ENCODE measurements at regions of chr2 and their contacts with region 1.

Region 1: GRCh38 chr2:43542285-43542937 is 53.4 kb downstream of the THADA start:
- DNase-seq: peak; percentile 32 to 59 (median 47)
- H3K4me3 ChIP-seq: no peak overlapping the region
- H3K4me3 Mint-ChIP-seq: no peak overlapping the region
- H3K27ac ChIP-seq: no peak overlapping the region
- H3K27ac Mint-ChIP-seq: no peak overlapping the region
- H3K4me1 ChIP-seq: peaks cover 29 to 39% of the 10 kb centered on the region in 2 donors
- H3K4me1 Mint-ChIP-seq: peaks cover 35% of the 10 kb centered on the region
- H3K27me3 ChIP-seq: no peaks in the 10 kb centered on the region
- H3K27me3 Mint-ChIP-seq: no peaks in the 10 kb centered on the region
- CTCF ChIP-seq: peak; percentile 79

Region 2: GRCh38 chr2:42859006-42859552 is 683.3 kb before region 1 on chr2:
- intact Hi-C with region 1: loop called in 1 of 2 experiments (anchors 10 kb)
- DNase-seq: peak; percentile 48 to 73 (median 66)
- H3K4me3 ChIP-seq: no peak overlapping the region
- H3K4me3 Mint-ChIP-seq: no peak overlapping the region
- H3K27ac ChIP-seq: no peak overlapping the region
- H3K27ac Mint-ChIP-seq: no peak overlapping the region
- H3K4me1 ChIP-seq: peaks cover 7 to 8% of the 10 kb centered on the region in 2 donors
- H3K4me1 Mint-ChIP-seq: peaks cover 8% of the 10 kb centered on the region
- H3K27me3 ChIP-seq: no peaks in the 10 kb centered on the region
- H3K27me3 Mint-ChIP-seq: peaks cover 1 to 5% (median 3%) of the 10 kb centered on the region in 3 donors
- CTCF ChIP-seq: peak; percentile 97

Region 3: DNA sequence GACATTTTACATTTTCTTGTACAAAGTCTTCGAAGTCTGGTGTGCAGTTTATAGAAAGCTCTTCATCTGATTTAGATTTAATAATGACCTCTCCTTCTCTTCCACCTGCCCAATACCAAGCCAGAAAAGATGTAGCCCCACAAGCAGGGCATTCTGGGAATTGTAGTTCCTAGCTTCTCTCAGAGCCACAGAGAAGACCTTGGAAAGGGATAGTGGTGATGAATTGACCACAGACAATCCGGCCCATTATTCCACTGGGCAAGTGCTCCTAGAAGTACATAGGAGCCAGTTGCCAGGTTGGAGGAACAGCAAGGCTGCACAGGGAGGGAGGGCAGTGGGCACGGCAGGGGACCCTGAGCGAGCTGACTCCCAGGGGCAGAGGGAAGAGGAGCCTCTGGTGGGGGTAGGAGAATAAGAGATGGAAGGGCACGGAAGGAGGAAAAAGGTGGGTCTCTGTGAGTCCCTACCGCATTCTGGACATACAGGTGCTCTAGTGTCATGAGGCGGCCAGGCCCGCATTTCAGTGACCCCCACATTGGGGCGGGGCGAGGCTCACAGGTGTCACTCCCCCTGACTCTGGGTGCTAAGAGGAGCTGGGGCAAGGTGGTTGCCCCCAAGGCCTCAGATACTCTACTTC is 597.5 kb before region 1 on chr2:
- intact Hi-C with region 1: loop called (anchors 5 kb)
- DNase-seq: no peak
- H3K4me3 ChIP-seq: no peak overlapping the region
- H3K4me3 Mint-ChIP-seq: no peak overlapping the region
- H3K27ac ChIP-seq: no peak overlapping the region
- H3K27ac Mint-ChIP-seq: peak overlapping the region in 1 of 7 donors; percentile 35
- H3K4me1 ChIP-seq: peaks cover 22 to 30% of the 10 kb centered on the region in 2 donors
- H3K4me1 Mint-ChIP-seq: peaks cover 38% of the 10 kb centered on the region
- H3K27me3 ChIP-seq: no peaks in the 10 kb centered on the region
- H3K27me3 Mint-ChIP-seq: peaks cover 0 to 3% (median 1%) of the 10 kb centered on the region in 3 donors
- CTCF ChIP-seq: no peak

Measured in CD14-positive monocyte (primary cell).